ENCODE measurements at regions of chr19 and their contacts with region 1.

Region 1: GRCh38 chr19:45717166-45717982 is 13.3 kb downstream of the FBXO46 start:
- DNase-seq: peak; percentile 100
- H3K4me3 Mint-ChIP-seq: peak overlapping the region; percentile 98
- H3K27ac Mint-ChIP-seq: peak overlapping the region; percentile 97
- H3K4me1 Mint-ChIP-seq: peaks cover 18% of the 10 kb centered on the region
- H3K27me3 Mint-ChIP-seq: no peaks in the 10 kb centered on the region
- CTCF ChIP-seq: no peak

Region 2: GRCh38 chr19:45705115-45705514 is 12.3 kb before region 1 on chr19:
- CTCF ChIA-PET with region 1: interaction called, 4 read pairs
- POLR2A ChIA-PET with region 1: interaction called, 12 read pairs
- intact Hi-C with region 1: no loop called
- DNase-seq: no peak
- H3K4me3 Mint-ChIP-seq: no peak overlapping the region
- H3K27ac Mint-ChIP-seq: no peak overlapping the region
- H3K4me1 Mint-ChIP-seq: no peaks in the 10 kb centered on the region
- H3K27me3 Mint-ChIP-seq: no peaks in the 10 kb centered on the region
- CTCF ChIP-seq: no peak

Region 3: DNA sequence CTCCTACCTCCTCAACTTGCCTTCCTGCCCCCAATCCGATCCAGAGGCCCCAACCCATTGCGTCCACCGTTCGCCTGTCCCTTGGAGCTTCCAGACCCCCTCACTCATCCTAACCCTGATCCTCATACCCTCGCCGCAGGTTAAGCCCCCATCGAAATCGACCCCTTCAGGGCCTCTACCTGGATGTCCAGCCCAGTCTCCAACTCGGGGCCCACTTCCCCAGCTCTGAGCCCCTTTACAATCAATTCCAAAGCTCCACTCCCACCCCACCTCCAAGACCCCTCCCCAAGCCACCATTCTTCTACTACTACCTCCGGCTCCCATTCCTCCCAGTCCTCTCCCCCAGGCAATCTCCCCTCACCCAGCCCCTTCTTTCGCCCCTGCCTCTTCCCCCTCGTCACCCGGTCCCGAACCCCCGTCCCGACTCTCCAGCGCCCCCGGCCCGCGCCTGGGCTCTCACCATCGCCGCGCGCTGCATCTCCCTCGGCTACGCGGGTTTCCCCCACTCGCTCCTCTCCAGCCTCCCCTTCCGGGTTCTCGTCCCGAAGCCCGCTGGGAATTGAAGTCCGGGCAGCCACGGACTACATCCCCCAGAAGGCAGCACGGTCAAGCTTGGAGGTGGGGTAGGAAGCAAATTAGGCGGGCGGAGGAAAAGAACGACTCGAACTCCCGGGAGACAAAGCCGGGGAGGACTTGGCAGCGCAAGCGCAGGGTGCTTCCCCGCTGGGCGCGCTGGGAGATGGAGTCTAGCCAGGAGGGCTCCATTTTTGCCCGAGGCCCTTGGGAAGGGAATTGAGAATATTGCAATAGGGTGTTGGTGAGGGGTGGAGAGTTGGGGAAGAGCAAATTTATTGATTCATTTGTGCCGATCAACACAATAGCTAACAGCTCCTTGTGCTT is 13.3 kb after region 1 on chr19 and contains the start of gene FBXO46:
- CTCF ChIA-PET with region 1: interaction called, 9 read pairs
- POLR2A ChIA-PET with region 1: interaction called, 62 read pairs
- intact Hi-C with region 1: no loop called
- DNase-seq: peak; percentile 99
- H3K4me3 Mint-ChIP-seq: peak within 1 kb of the TSS; percentile 99
- H3K27ac Mint-ChIP-seq: peak within 1 kb of the TSS; percentile 82
- H3K4me1 Mint-ChIP-seq: peaks cover 13% of the 10 kb centered on the region
- H3K27me3 Mint-ChIP-seq: no peaks in the 10 kb centered on the region
- CTCF ChIP-seq: no peak
- total RNA-seq, gene FBXO46: 13.6 and 15.0 TPM in 2 replicates

Region 4: GRCh38 chr19:45753546-45753945 is 36.2 kb after region 1 on chr19:
- CTCF ChIA-PET with region 1: interaction called, 4 read pairs
- POLR2A ChIA-PET with region 1: interaction called, 9 read pairs
- intact Hi-C with region 1: loop called (anchors 1 kb)
- DNase-seq: no peak
- H3K4me3 Mint-ChIP-seq: no peak overlapping the region
- H3K27ac Mint-ChIP-seq: no peak overlapping the region
- H3K4me1 Mint-ChIP-seq: peaks cover 12% of the 10 kb centered on the region
- H3K27me3 Mint-ChIP-seq: no peaks in the 10 kb centered on the region
- CTCF ChIP-seq: no peak

Region 5: DNA sequence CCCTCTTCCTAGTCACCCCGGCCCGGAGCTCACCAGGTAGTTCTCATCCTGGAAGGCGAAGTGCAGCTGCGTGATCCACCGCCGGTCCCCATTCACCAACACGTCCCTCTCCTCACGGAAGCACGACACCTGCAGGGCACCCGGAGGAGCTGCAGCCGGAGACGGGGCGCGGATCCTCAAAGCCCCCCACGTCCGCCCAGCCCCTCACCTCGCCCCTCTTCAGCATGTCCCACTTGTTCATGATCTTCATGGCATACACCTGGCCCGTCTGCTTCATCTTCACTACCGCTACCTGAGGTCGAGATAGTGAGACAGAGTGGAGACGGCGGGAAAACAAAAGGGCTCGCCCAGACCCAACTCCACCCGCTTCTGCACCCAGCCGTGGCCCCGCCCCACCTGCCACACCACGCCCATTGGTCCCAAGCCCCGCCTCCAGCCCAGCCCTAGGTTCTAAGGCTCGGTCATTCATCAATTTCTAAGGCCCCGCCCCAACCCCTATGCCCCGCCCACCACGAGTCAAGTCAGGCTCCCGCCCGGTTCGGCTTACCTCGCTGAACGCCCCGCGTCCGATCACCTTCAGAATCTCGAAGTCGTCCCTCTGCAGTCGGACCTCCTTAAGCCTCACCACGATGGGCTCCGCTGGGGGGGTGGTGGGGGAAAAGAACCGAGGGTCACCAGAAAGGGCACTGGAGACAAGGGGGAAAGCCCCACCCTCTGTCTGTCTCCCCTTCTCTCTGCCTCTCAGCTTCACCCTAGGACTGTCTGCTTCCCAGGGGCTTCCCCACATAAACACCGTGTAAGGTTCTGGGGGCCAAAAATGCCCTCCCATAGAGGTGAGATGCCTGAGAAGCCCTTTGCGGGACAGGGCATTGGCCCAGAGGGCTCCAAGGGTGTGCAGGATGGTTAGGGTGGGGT is 62.1 kb after region 1 on chr19:
- CTCF ChIA-PET with region 1: no interaction called
- POLR2A ChIA-PET with region 1: interaction called, 13 read pairs
- intact Hi-C with region 1: no loop called
- DNase-seq: peak; percentile 95
- H3K4me3 Mint-ChIP-seq: peak overlapping the region; percentile 58
- H3K27ac Mint-ChIP-seq: no peak overlapping the region
- H3K4me1 Mint-ChIP-seq: peaks cover 28% of the 10 kb centered on the region
- H3K27me3 Mint-ChIP-seq: no peaks in the 10 kb centered on the region
- CTCF ChIP-seq: peak; percentile 68

Region 6: DNA sequence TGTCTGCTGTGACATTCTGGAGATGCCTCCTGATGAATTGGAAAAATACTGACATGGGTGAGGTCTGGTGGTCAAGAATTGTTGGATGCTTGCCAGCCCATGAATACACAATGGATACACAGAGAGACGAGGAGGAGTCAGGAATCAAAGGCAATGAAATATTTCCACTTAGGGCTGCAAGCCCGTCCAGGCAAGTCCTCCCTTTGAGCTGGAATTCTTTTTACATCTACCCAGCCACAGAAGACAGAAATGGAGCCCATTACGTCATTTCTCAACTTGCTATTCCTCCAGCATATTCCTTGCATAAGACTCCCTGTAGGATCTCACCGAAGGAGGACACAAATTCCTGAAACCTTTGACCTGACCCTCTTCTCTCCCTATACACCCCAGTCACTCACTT is 339.2 kb after region 1 on chr19:
- CTCF ChIA-PET with region 1: no interaction called
- POLR2A ChIA-PET with region 1: no interaction called
- intact Hi-C with region 1: no loop called
- DNase-seq: peak; percentile 61
- H3K4me3 Mint-ChIP-seq: no peak overlapping the region
- H3K27ac Mint-ChIP-seq: peak overlapping the region; percentile 10
- H3K4me1 Mint-ChIP-seq: peaks cover 9% of the 10 kb centered on the region
- H3K27me3 Mint-ChIP-seq: no peaks in the 10 kb centered on the region
- CTCF ChIP-seq: no peak

Region 7: DNA sequence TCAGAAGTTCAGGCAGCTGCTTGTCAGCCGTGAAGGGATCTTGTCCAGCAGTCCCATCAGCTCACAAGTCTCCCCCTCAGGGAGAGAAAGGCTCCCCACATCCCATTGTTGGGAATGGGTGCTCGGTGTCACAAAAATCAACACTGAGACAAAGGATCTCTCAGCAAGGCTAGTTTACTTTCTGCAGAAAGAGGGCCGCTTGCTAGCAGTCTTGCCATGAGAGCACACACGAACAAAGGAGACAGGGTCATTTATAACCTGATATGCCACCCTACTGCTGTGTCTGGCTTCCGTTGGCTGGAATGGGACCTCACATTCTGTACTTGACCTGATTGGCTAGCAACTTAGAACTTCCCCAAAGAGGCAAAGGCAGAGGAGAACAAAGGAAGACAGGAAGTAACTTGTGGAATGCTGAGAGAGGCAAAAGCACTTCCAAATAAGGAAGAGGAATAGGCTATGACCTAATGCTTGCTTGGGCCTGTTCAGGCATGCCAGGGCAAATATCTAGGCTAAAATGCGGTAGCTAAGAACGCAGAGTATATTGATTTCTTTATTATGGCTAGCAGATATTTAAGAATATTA is 415.8 kb after region 1 on chr19:
- CTCF ChIA-PET with region 1: no interaction called
- POLR2A ChIA-PET with region 1: no interaction called
- intact Hi-C with region 1: no loop called
- DNase-seq: peak; percentile 95
- H3K4me3 Mint-ChIP-seq: peak overlapping the region; percentile 62
- H3K27ac Mint-ChIP-seq: peak overlapping the region; percentile 99
- H3K4me1 Mint-ChIP-seq: peaks cover 27% of the 10 kb centered on the region
- H3K27me3 Mint-ChIP-seq: no peaks in the 10 kb centered on the region
- CTCF ChIP-seq: no peak

Measured in MCF 10A (cell line).